HEK293T (cell line): ENCODE measurements at regions of chr7 and their contacts with region 1.

Region 1: GRCh38 chr7:26409661-26410547 is 118.2 kb downstream of the SNX10 start:
- DNase-seq: no peak

Region 2: GRCh38 chr7:26398756-26399501 is 11.0 kb before region 1 on chr7:
- CTCF ChIA-PET with region 1: no interaction called
- POLR2A ChIA-PET with region 1: interaction called, 10 read pairs
- DNase-seq: no peak

Region 3: DNA sequence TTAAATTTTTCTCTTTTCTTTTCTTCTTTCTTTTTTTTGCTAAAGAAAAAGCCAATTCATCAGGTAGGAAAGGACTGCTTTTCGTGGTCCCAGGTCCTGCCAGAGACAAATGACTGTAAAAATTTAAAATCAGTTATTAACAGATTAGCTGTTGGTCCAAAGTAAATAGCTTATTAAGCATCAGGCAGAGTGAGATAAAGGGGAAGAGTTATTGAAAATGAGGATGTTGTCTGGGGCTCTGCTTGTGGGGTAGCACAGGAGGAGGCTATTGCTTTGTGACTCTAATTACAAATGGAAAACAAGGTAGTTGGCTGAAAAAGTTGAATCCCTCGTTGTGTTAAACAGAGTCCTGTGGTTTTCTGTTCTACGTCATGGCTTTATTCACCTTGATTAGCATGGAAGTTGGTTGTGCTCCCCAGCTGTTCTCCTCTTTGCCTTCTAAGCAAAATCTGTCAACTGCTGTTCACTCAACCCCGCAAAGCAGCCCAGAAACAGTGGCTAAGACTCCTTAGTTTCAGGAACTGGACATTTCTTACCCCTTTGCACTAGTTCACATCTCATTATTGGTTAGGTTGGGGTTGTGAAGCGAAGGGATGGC is 10.6 kb after region 1 on chr7:
- CTCF ChIA-PET with region 1: no interaction called
- POLR2A ChIA-PET with region 1: no interaction called
- DNase-seq: no peak